Lower leg skin (tissue), 4 donors: ENCODE measurements at regions of chr3 and their contacts with region 1.

Region 1: GRCh38 chr3:158970006-158970405 is 168.2 kb downstream of the MFSD1 start:
- DNase-seq: no peak
- H3K4me3 ChIP-seq: no peak overlapping the region
- CTCF ChIP-seq: no peak
- POLR2A ChIP-seq: no peak

Region 2: GRCh38 chr3:158849757-158850156 is 120.2 kb before region 1 on chr3:
- intact Hi-C with region 1: no loop called
- DNase-seq: no peak
- H3K4me3 ChIP-seq: no peak overlapping the region
- CTCF ChIP-seq: no peak
- POLR2A ChIP-seq: no peak

Region 3: DNA sequence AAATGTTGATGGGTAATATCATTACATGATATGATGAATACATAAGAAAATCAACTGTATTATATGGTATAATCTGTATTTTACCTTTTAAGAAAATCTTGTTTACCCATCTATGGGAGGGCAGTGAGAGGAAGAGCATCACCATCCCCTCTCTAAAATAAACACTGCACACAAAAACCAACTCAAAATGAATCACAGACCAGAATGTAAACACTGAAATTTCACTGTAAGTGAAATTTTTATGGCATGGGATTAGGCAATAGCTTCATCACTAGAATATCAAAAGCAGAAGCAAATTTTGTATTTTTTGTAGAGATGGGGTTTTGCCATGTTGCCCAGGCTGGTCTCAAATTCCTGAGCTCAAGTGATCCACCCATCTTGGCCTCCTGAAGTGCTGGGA is 1402.8 kb after region 1 on chr3:
- intact Hi-C with region 1: loop called (anchors 5 kb)
- DNase-seq: no peak
- H3K4me3 ChIP-seq: no peak overlapping the region
- CTCF ChIP-seq: no peak
- POLR2A ChIP-seq: no peak